Activated CD8-positive, alpha-beta T cell treated with anti-CD3 and anti-CD28 coated beads, Interleukin-2, amount 10 ng/mL, durations not matched to agents 7 days and 5 days (primary cell): ENCODE measurements at regions of chr2 and their contacts with region 1.

Region 1: DNA sequence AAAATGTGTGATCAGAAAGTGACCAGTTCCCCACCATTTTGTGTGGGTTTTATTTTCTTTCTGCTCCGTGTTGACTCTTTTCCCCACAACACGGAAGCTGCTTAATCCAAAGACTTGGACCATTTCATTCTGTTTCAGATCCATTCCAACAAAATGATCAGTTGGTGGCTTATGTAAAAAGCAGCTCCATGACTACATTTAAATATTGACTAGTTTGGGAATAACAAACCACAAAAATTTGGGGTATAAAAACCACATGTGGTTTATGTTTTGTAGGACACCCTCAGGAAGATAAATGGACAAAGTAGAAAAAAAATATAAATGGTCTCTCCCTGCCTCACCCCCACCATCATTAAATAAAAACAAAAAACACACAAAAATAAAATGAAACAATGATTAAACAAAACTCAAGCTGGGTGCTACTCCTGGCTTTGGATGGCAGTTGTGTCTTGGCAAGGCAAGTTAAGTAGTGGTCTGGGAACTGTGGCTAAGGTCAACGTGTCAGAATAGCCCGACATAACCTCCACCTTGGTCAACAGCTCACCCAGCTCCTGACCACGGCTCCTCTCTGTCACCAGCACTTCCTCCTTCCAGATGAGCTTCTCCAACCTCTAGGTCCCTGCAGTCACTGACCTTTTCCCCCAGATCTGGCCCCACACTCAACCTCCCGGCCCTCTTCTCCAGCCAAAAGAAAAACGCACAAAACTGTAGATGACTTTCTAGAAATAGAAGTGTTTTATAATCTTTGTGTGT is 12.8 kb upstream of the WIPF1 start:
- DNase-seq: peak; percentile 31
- ATAC-seq: peak; percentile 21
- H3K4me3 Mint-ChIP-seq: peak overlapping the region; percentile 39
- H3K27ac Mint-ChIP-seq: peak overlapping the region; percentile 88
- H3K4me1 Mint-ChIP-seq: peaks cover 92% of the 10 kb centered on the region
- H3K27me3 Mint-ChIP-seq: no peaks in the 10 kb centered on the region

Region 2: GRCh38 chr2:174623690-174624089 is 13.3 kb after region 1 on chr2:
- CTCF ChIA-PET with region 1: interaction called, 6 read pairs
- POLR2A ChIA-PET with region 1: interaction called, 28 read pairs
- DNase-seq: no peak
- ATAC-seq: no peak
- H3K4me3 Mint-ChIP-seq: no peak overlapping the region
- H3K27ac Mint-ChIP-seq: peak overlapping the region; percentile 55
- H3K4me1 Mint-ChIP-seq: peaks cover 72% of the 10 kb centered on the region
- H3K27me3 Mint-ChIP-seq: no peaks in the 10 kb centered on the region

Region 3: GRCh38 chr2:176063958-176064357 is 1453.5 kb after region 1 on chr2:
- CTCF ChIA-PET with region 1: no interaction called
- POLR2A ChIA-PET with region 1: no interaction called
- DNase-seq: no peak
- ATAC-seq: no peak
- H3K4me3 Mint-ChIP-seq: no peak overlapping the region
- H3K27ac Mint-ChIP-seq: no peak overlapping the region
- H3K4me1 Mint-ChIP-seq: peaks cover 5% of the 10 kb centered on the region
- H3K27me3 Mint-ChIP-seq: peaks cover 58% of the 10 kb centered on the region